CD14-positive monocyte (primary cell): ENCODE measurements at regions of chr2 and their contacts with region 1.

Region 1: GRCh38 chr2:85318222-85319074 is 9.3 kb downstream of the TGOLN2 start:
- DNase-seq: peak; percentile 60 to 85 (median 67)
- H3K4me3 ChIP-seq: no peak overlapping the region
- H3K4me3 Mint-ChIP-seq: no peak overlapping the region
- H3K27ac ChIP-seq: peak overlapping the region; percentile 30 to 71
- H3K27ac Mint-ChIP-seq: peak overlapping the region; percentile 58 to 90 (median 80)
- H3K4me1 ChIP-seq: peaks cover 48 to 55% of the 10 kb centered on the region in 2 donors
- H3K4me1 Mint-ChIP-seq: peaks cover 56% of the 10 kb centered on the region
- H3K27me3 ChIP-seq: no peaks in the 10 kb centered on the region
- H3K27me3 Mint-ChIP-seq: peaks cover 0 to 3% (median 0%) of the 10 kb centered on the region in 3 donors
- CTCF ChIP-seq: no peak

Region 2: DNA sequence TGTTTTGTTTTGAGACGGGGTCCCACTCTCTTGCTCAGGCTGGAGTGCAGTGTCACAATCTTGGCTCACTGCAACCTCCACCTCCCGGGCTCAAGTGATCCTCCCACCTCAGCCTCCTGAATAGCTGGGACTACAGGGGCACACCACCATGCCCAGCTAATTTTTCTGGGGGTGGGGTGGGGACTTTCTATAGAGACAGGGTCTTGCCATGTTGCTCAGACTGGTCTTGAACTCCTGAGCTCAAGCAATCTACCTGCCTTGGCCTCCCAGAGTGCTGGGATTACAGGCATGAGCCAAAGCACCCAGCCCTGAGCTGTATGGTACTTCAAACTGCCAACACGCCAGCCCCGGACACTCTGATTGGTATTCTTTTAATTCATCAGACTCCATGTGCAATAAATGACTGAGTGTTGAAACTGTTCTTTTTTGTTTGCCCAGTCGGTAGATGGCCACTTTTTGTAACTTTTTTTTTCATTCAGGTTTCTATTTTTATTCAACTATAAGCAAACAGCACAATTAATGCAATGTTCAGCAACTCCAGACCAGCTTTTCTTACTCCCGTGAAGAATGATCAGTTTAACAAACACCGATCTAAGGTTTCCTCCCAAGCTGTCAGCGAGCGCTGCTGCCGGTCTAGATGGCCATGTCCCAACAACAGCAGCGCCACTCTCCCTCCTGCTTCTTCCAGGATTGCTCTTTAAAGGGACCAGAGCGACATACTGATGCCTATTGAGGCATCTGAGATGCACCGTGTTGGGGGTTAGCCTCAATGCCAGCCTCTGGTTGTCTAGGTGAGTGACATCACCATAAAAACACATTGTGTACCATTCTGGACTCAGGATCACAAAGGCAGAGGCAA is 21.8 kb after region 1 on chr2:
- intact Hi-C with region 1: loop called in 1 of 2 experiments (anchors 1 kb)
- DNase-seq: no peak
- H3K4me3 ChIP-seq: no peak overlapping the region
- H3K4me3 Mint-ChIP-seq: no peak overlapping the region
- H3K27ac ChIP-seq: no peak overlapping the region
- H3K27ac Mint-ChIP-seq: no peak overlapping the region
- H3K4me1 ChIP-seq: no peaks in the 10 kb centered on the region
- H3K4me1 Mint-ChIP-seq: no peaks in the 10 kb centered on the region
- H3K27me3 ChIP-seq: no peaks in the 10 kb centered on the region
- H3K27me3 Mint-ChIP-seq: peaks cover 5 to 11% (median 6%) of the 10 kb centered on the region in 3 donors
- CTCF ChIP-seq: no peak

Region 3: DNA sequence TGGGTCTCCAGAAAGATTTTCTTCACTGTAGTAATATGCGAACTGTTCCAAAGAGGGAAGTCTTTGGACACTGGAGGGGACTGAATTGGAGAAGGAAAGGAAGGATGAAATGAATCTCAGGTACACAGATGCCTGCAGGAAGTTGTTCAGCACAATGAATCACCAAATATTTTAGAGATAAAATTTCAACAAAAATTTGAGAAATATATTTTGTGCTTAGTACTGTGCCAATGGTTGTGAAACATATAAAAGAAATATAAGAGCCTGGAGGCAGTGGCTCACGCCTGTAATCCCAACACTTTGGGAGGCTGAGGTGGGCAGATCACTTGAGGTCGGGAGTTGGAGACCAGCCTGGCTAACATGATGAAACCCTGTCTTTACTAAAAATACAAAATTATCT is 39.3 kb after region 1 on chr2:
- intact Hi-C with region 1: no loop called
- DNase-seq: no peak
- H3K4me3 ChIP-seq: no peak overlapping the region
- H3K4me3 Mint-ChIP-seq: no peak overlapping the region
- H3K27ac ChIP-seq: no peak overlapping the region
- H3K27ac Mint-ChIP-seq: no peak overlapping the region
- H3K4me1 ChIP-seq: peaks cover 14 to 22% of the 10 kb centered on the region in 2 donors
- H3K4me1 Mint-ChIP-seq: peaks cover 33% of the 10 kb centered on the region
- H3K27me3 ChIP-seq: no peaks in the 10 kb centered on the region
- H3K27me3 Mint-ChIP-seq: peaks cover 0 to 2% (median 0%) of the 10 kb centered on the region in 3 donors
- CTCF ChIP-seq: no peak